ENCODE measurements at regions of chr2 and their contacts with region 1.

Region 1: GRCh38 chr2:16635791-16636699 is 29.6 kb downstream of the CYRIA start:
- DNase-seq: peak in 1 of 2 donors; percentile 29
- ATAC-seq: peak; percentile 61 to 65 (median 63)
- H3K4me3 ChIP-seq: no peak overlapping the region
- H3K4me3 Mint-ChIP-seq: peak overlapping the region; percentile 65
- H3K27ac ChIP-seq: no peak overlapping the region
- H3K27ac Mint-ChIP-seq: peak overlapping the region; percentile 67 to 81
- H3K4me1 ChIP-seq: peaks cover 73% of the 10 kb centered on the region
- H3K4me1 Mint-ChIP-seq: peaks cover 85 to 91% of the 10 kb centered on the region in 2 donors
- H3K27me3 ChIP-seq: no peaks in the 10 kb centered on the region
- H3K27me3 Mint-ChIP-seq: no peaks in the 10 kb centered on the region
- CTCF ChIP-seq: no peak

Region 2: DNA sequence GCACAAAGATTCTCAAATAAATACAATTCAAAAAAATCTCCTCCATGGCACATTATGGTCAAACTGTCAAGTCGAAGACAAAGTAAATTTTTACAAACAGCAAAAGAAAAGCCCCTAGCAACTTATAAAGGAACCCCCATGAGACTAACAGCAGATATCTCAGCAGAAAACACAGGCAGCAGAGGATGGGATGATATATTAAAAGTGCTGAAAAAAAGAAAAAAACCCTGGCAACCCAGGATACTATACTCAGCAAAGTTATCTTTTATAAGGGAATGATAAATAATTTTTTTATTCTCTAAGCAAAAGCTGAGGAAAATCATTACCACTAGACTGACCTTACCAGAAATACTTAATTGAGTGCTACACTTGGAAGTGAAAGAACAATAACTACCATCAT is 296.8 kb before region 1 on chr2:
- intact Hi-C with region 1: no loop called
- DNase-seq: no peak
- ATAC-seq: no peak
- H3K4me3 ChIP-seq: no peak overlapping the region
- H3K4me3 Mint-ChIP-seq: no peak overlapping the region
- H3K27ac ChIP-seq: no peak overlapping the region
- H3K27ac Mint-ChIP-seq: no peak overlapping the region
- H3K4me1 ChIP-seq: no peaks in the 10 kb centered on the region
- H3K4me1 Mint-ChIP-seq: no peaks in the 10 kb centered on the region
- H3K27me3 ChIP-seq: no peaks in the 10 kb centered on the region
- H3K27me3 Mint-ChIP-seq: peaks cover 0 to 3% of the 10 kb centered on the region in 2 donors
- CTCF ChIP-seq: no peak

Region 3: DNA sequence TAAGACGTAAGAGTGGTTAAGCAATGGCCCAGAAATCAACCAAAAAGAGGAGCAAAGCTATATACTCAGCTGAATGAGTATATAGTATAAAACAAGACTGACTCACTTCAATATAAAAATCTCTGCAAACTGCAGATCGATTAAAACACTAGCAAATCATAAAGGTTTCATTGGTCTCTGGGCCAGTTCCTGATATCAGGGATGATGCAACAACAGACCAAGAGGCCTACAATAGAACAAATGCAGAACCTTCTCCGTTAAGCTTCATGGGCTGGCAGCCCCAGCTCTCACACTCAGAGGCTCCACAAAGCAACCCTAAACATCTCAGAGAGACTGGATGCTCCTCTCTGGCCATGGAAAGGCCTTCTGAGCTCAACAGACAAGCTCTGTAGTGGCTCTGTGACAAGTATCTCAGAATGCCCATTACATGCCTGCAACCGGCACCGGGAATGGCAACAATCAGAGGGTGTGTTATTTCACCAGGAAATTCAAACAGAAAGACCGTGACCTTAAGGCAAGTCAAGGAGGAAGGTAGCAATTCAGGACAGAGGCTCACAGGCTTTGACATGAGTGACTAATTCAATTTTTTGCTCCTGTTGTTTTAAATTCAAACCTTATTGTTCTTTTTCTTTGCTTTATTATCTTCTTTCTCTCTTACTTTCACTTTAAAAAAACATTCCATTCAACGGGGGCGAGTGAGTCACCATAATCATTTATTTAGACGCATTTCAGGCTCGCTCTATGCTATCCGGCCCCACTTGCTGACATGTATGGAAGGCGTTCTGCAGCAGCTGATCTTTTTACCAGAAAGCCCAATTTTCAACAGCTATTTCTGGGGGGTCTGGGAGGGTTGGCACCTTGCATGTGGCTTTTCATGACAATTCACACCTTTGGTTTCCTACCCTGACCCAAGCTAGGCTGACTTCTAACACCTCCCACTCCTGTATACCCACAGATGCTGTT is 14.5 kb after region 1 on chr2:
- intact Hi-C with region 1: loop called (anchors 1 kb)
- DNase-seq: peak in 1 of 2 donors; percentile 35
- ATAC-seq: peak; percentile 61 to 74 (median 66)
- H3K4me3 ChIP-seq: peak overlapping the region; percentile 6
- H3K4me3 Mint-ChIP-seq: peak overlapping the region; percentile 81
- H3K27ac ChIP-seq: peak overlapping the region; percentile 77
- H3K27ac Mint-ChIP-seq: peak overlapping the region; percentile 73 to 93
- H3K4me1 ChIP-seq: peaks cover 72% of the 10 kb centered on the region
- H3K4me1 Mint-ChIP-seq: peaks cover 93 to 98% of the 10 kb centered on the region in 2 donors
- H3K27me3 ChIP-seq: no peaks in the 10 kb centered on the region
- H3K27me3 Mint-ChIP-seq: no peaks in the 10 kb centered on the region
- CTCF ChIP-seq: no peak

Measured in natural killer cell (primary cell).